Tibial artery (tissue), 4 donors: ENCODE measurements at regions of chr10 and their contacts with region 1.

Region 1: DNA sequence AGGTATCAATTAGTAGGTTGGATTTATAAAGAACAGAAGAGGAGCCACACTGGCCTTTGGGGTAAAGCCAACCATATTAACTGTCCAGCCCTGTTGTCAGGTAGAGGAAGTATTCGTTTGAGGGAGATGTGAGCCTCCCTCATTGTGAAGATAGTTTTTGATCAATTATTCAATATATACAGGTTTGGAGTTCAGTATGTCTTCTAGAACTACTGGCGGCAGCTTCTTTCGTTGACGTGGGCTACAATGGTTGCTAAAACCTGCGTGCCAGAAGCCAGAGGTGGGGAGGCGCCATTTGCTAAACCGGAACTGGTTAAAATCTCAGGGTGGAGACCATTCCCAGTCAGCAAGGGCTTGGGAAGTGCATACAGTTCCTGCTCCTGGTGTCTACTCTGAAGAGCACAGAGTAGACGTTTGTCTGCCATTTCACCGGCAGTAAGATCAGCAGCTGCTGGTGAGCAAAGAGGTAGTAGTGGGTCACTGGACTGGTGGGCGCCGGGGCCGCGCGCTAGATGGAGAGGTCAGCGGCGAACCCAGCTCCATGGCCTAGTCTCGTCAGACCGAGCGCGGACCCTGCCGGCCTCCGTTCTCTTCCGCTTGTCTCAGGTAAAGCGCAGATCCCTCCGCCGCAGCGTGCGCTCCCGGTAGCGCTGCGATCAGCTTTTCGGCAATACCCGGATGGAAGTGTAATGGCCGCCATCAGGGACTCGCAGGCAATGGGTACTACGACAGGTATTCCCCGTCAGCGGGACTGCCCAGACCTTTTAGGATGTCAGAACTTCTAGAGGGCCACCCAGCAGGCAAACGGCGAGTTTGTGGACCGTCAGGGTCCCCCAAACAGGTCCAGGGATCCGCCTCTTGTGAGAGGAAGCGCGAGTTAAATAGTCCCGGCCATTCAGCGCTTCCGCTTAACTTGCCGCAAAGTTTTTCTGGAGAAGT is at the start of gene ZNF518A:
- DNase-seq: peak; percentile 80 to 93
- H3K4me3 ChIP-seq: peak within 1 kb of the TSS; percentile 76 to 79
- H3K27ac ChIP-seq: peak within 1 kb of the TSS; percentile 85
- H3K4me1 ChIP-seq: peaks cover 0 to 11% (median 7%) of the 10 kb centered on the region in 4 donors
- H3K27me3 ChIP-seq: peaks cover 0 to 12% of the 10 kb centered on the region in 2 donors
- CTCF ChIP-seq: no peak

Region 2: DNA sequence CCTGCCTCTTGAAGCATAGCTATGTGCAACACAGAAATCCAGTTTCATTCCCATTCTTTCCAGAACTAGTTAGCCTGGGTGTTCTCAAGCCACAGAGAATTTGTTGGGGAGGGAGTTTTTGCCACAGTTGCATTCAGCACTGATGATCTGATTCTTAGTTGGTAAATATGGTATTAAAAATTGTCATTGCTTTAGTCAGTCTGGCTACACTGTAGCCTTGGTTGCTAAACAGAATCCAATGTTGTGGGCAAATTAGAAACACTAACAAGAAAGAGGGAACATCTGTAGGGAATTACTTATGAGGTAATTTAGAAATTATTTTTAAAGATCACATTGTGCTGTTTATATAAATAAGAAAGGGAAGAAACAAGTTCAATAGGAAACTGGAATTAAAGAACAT is 278.9 kb before region 1 on chr10:
- intact Hi-C with region 1: no loop called
- DNase-seq: no peak
- H3K4me3 ChIP-seq: no peak overlapping the region
- H3K27ac ChIP-seq: no peak overlapping the region
- H3K4me1 ChIP-seq: no peaks in the 10 kb centered on the region
- H3K27me3 ChIP-seq: no peaks in the 10 kb centered on the region
- CTCF ChIP-seq: no peak

Region 3: DNA sequence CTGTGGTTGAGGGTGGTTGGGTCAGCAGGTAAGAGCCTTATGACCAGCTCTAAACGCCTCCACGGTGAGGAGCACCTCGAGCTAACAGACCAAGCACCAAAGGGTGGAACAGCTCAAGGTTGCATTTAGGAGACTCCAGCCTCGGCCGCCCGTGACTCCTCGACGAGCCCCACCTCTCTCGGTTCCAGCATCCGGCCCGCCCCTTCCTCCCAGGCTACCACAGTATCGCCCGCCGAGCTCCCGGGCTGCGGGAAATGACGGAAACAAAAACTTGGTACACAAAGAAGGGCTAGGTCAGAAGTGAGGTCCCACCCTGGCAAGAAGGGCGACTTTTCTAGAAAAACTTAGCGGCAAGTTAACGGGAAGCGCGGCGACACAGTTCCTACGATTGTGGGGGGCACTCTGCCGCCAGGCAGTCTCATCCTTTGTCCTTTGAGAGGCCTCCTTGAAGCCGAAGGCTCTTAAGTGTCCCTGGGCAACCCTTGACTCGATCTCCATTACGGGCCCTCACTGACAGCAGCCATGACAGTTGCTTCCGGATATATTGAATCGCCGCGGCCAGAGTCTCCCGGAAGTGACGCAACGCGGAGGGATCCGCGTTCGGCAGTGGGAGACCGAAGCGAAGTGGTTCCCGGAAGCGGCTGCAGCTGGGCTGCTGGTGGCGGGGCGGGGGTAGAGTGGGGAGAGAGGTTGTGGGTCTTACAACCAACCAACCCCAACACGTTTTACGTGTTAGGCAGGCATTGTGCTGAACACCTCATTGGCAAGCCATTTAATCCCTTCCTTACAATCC is 39.8 kb before region 1 on chr10:
- intact Hi-C with region 1: loop called (anchors 2 kb)
- DNase-seq: peak; percentile 90 to 93
- H3K4me3 ChIP-seq: peak overlapping the region; percentile 69 to 87
- H3K27ac ChIP-seq: peak overlapping the region; percentile 87
- H3K4me1 ChIP-seq: peaks cover 0 to 4% (median 0%) of the 10 kb centered on the region in 4 donors
- H3K27me3 ChIP-seq: peaks cover 0 to 23% of the 10 kb centered on the region in 2 donors
- CTCF ChIP-seq: no peak